Posterior cingulate gyrus (tissue), 11 donors: ENCODE measurements at regions of chr4 and their contacts with region 1.

Region 1: GRCh38 chr4:93764639-93765246 is 63.8 kb upstream of the ATOH1 start:
- DNase-seq: peak in 1 of 10 donors; percentile 15

Region 2: GRCh38 chr4:93116624-93117023 is 648.1 kb before region 1 on chr4:
- intact Hi-C with region 1: no loop called
- DNase-seq: no peak

Region 3: GRCh38 chr4:93710101-93710846 is 54.5 kb before region 1 on chr4:
- intact Hi-C with region 1: loop called (anchors 1 kb)
- DNase-seq: peak in 5 of 10 donors; percentile 8 to 57 (median 14)